Activated CD4-positive, alpha-beta T cell treated with anti-CD3 and anti-CD28 coated beads for 36 hours (primary cell): ENCODE measurements at regions of chr11 and their contacts with region 1.

Region 1: GRCh38 chr11:66842896-66843775 is at the start of gene RCE1:
- DNase-seq: peak; percentile 95
- ATAC-seq: peak; percentile 85
- H3K4me3 Mint-ChIP-seq: peak within 1 kb of the TSS; percentile 92
- H3K27ac Mint-ChIP-seq: peak within 1 kb of the TSS; percentile 92
- H3K4me1 Mint-ChIP-seq: peaks cover 51% of the 10 kb centered on the region
- H3K27me3 Mint-ChIP-seq: no peaks in the 10 kb centered on the region
- total RNA-seq, gene RCE1: 24.9 to 25.6 TPM

Region 2: DNA sequence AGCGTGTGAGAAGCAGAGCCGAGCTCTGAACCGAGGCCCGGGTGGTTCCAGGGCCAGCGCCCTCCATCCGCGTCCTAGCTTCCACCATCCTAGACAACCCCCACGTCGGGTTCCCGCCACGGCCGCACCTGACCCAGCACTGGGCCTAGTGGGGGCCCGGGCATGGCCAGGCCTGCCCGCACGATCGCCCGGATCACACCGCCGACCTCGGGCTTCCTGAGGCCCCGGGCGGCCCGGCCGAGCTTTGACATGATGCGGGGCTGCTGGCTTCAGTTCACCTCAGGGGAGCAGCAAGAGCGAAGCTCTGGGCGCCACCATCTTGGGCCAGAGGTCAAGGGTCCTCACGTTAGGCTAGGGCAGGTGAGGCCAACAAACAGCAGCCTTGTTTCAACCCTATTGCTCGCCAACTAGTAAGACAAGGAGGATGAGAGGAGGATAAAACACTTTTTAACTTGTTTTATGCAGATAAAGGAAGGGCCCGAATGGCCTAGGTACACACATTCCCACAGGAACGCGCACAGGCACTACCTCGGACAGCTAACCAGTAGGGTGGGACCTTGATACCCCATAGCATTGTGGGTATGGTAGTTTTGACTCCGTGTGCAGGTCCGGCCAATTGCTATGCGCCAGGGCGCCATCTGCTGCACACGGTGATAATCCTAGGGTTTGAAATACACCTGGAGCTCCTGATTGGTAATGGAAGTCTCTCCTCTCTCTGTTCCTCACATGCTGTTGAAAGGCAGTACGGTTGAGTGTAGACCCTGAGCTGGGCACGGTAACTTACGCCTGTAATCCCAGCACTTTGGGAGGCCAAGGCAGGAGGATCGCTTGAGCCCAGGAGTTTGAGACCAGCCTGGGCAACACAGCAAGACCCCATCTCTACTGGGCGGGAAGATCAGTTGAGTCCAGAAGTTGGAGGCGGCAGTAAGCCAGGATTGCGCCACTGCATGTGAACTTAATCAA is 404.4 kb before region 1 on chr11 and contains the start of gene MRPL11:
- CTCF ChIA-PET with region 1: no interaction called
- POLR2A ChIA-PET with region 1: no interaction called
- intact Hi-C with region 1: loop called in 1 of 2 experiments (anchors 1 kb)
- DNase-seq: peak; percentile 94
- ATAC-seq: peak; percentile 99
- H3K4me3 Mint-ChIP-seq: peak within 1 kb of the TSS; percentile 85
- H3K27ac Mint-ChIP-seq: peak within 1 kb of the TSS; percentile 98
- H3K4me1 Mint-ChIP-seq: peaks cover 8% of the 10 kb centered on the region
- H3K27me3 Mint-ChIP-seq: no peaks in the 10 kb centered on the region
- total RNA-seq, gene MRPL11: 115 to 120 TPM

Region 3: DNA sequence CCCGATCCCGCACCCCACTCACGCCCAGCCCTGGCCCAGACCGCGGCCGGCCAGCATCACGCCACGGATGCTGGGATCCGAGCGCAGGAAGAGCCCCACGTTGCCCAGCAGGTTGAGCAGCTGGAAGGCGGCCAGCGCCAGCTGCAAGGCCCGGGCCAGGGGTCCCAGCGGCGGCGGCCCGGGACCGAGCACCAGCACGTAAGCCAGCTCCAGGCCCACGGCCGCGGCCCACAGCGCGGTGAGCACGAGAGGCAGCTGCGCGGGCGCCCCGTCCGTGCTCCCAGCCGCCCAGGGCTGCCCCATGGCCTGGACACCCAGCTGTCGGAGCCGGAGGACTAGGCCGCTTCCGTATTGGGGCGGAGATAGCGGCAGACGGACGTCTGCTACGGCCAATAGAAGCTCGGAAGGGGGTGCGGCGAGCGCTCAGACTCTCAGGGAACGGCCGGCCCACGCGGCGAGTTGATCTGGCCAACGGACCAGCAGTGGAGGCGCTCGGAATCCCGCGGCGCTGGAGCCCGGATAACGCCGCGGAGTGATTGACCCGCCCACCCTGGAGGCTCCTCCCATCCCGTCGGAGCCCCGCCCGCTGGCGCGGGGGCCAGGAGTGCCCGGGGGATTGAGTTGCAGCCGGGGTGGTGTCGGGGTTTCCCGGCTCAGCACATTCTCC is 297.3 kb before region 1 on chr11 and contains the start of gene ZDHHC24:
- CTCF ChIA-PET with region 1: no interaction called
- POLR2A ChIA-PET with region 1: no interaction called
- intact Hi-C with region 1: loop called in 1 of 2 experiments (anchors 1 kb)
- DNase-seq: peak; percentile 95
- ATAC-seq: peak; percentile 94
- H3K4me3 Mint-ChIP-seq: peak within 1 kb of the TSS; percentile 76
- H3K27ac Mint-ChIP-seq: peak within 1 kb of the TSS; percentile 67
- H3K4me1 Mint-ChIP-seq: peaks cover 20% of the 10 kb centered on the region
- H3K27me3 Mint-ChIP-seq: peaks cover 5% of the 10 kb centered on the region
- total RNA-seq, gene ZDHHC24: 9.7 to 11.3 TPM

Region 4: DNA sequence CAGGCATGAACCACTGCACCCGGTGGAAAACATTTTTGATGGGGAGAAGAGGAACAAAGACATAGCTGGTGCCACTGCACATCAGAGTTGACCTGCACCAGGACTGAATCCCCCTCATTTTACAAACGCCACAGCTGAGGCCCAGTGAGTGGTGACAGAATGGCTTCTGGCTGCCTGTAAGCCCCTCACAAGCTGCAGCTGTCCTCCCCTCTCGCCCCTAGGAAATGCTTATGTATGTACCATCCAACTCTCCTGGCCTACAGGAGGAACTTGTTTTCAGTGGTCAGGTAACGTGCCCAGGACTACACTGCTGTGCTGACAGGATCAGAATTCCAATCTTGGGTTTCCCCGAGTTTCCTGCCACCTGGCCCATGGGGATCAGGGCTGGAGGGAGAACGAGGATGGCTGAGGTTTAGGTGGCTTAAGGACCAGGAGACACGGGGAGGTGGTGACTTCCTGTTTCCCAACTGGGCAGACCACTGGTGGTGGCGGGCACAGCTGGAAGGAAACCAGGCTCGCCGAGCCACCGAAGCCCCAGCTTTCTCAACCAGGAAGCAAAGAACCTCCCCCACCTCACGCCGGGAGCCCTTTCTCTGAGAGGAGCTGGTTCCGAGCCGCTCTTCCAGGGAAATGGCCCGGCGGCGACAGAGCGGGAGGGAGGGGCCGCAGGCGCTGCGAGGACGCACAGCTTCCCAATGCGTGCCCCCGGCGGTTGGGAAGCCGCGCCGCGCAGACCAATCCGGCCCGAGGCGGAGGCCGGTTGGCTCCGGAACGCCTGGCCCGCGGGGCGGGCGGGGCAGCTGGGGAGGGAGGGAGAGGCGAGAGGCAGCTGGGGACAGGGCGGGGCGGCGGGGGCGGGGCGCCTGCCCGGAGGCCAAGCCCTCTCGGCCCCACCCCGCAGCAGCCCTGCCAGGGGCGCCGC is 12.7 kb after region 1 on chr11:
- CTCF ChIA-PET with region 1: interaction called, 11 read pairs
- POLR2A ChIA-PET with region 1: interaction called, 9 read pairs
- intact Hi-C with region 1: loop called (anchors 1 kb)
- DNase-seq: peak; percentile 94
- ATAC-seq: peak; percentile 83
- H3K4me3 Mint-ChIP-seq: peak overlapping the region; percentile 82
- H3K27ac Mint-ChIP-seq: peak overlapping the region; percentile 73
- H3K4me1 Mint-ChIP-seq: peaks cover 11% of the 10 kb centered on the region
- H3K27me3 Mint-ChIP-seq: no peaks in the 10 kb centered on the region

Region 5: DNA sequence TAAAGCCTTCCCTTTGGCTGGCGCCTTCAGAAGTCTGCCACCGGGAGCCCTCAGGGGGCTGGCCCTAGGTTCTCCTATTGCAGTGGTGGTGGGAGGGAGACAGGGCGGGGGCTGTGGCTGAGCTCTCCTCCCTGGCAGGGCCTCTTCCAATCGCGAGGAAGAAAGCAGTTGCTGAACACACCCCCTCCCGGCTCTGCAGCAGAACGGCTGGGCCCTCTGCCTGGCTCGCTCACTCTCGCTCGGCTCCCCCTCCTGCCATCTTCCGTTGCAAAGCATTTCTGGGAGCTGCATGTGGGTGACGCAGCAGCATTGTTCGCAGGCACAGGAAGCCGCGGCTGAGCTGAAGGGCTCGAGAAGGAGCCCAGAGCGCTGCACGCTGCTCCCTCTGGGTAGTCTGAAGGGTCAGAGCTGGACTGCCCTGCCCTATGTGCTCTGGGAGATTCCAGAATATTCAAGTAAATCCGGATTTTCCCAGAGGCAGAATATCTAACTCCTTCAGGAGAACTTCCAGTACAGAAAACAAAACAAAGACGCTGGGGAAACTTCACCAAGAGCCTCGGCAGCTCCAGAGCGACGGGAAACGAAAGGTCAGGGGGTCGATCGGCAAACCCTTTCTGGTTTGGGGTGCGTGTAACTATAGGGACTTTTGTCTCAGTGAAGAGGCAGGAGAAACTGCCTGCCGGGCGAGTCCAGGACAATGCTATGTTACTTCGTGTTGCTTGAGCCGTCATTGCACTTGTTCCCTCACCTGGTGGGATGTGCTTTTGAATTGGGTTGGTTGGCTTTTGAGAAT is 396.8 kb after region 1 on chr11:
- CTCF ChIA-PET with region 1: no interaction called
- POLR2A ChIA-PET with region 1: no interaction called
- intact Hi-C with region 1: loop called in 1 of 2 experiments (anchors 1 kb)
- DNase-seq: peak; percentile 98
- ATAC-seq: peak; percentile 94
- H3K4me3 Mint-ChIP-seq: peak overlapping the region; percentile 98
- H3K27ac Mint-ChIP-seq: peak overlapping the region; percentile 99
- H3K4me1 Mint-ChIP-seq: peaks cover 43% of the 10 kb centered on the region
- H3K27me3 Mint-ChIP-seq: no peaks in the 10 kb centered on the region